ENCODE measurements at regions of chr4 and their contacts with region 1.

Region 1: DNA sequence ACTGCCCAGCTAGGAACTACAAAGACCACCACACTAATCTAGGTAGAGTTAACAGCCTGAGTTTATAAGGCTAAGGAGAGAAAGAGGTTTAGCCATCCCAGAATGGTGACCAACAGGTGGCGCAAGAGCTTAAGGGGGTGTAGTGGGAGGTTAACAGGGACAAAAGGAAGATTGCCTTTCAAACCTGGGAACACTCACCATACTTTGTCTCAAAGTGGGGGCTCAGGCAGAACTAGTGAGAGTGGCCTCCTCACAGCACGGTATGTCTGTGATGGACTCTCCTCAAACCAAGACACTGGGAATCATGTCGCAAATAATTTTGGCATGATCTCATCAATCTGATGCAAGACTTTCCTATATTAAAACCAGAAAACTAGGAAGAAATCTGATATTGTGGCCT is 23.4 kb downstream of the CCNI start:
- DNase-seq: peak; percentile 75
- H3K4me3 Mint-ChIP-seq: no peak overlapping the region
- H3K27ac Mint-ChIP-seq: no peak overlapping the region
- H3K4me1 Mint-ChIP-seq: no peaks in the 10 kb centered on the region
- H3K27me3 Mint-ChIP-seq: no peaks in the 10 kb centered on the region

Region 2: GRCh38 chr4:77073106-77073809 is 20.9 kb after region 1 on chr4:
- CTCF ChIA-PET with region 1: interaction called, 12 read pairs
- DNase-seq: no peak
- H3K4me3 Mint-ChIP-seq: no peak overlapping the region
- H3K27ac Mint-ChIP-seq: no peak overlapping the region
- H3K4me1 Mint-ChIP-seq: peaks cover 48% of the 10 kb centered on the region
- H3K27me3 Mint-ChIP-seq: peaks cover 6% of the 10 kb centered on the region

Region 3: GRCh38 chr4:77293436-77293835 is 241.1 kb after region 1 on chr4:
- CTCF ChIA-PET with region 1: no interaction called
- DNase-seq: no peak
- H3K4me3 Mint-ChIP-seq: no peak overlapping the region
- H3K27ac Mint-ChIP-seq: no peak overlapping the region
- H3K4me1 Mint-ChIP-seq: no peaks in the 10 kb centered on the region
- H3K27me3 Mint-ChIP-seq: peaks cover 5% of the 10 kb centered on the region

Measured in activated naive CD4-positive, alpha-beta T cell treated with anti-CD3 and anti-CD28 coated beads, Interleukin-2, amount 10 ng/mL, durations not matched to agents 7 days and 5 days (primary cell).